ENCODE measurements at regions of chrX and their contacts with region 1.

Region 1: DNA sequence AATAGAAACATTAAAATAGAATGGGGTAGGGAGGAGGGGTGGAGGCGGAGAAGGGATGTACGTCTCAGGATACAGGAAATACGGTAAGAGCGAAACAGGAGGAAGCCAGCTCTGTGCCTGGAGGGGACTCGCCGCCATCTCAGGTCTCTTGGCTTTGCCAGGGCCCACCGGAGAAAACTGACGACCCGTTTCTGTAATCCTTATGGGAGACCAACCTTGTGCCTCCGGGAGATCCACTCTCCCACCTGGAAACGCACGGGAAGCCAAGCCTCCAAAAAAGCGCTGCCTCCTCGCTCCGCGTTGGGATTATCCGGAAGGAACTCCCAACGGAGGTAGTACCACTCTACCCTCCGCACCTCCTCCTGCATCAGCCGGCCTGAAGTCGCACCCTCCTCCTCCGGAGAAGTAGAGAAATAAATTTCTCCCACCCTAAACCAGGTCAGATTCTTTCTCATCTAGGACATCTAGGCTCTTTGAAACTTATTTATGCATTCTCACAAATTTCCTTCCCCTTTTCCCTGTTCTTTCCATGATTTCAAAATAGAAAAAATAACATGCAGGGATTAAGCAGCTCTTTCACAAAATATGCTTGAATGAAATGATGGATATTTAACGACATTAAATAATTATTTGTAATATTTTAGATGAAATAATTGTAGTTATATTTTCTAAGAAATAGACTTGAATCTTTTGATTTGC is at the start of gene NBDY:
- DNase-seq: peak; percentile 20 to 36
- ATAC-seq: peak; percentile 88 to 98 (median 94)
- H3K4me3 ChIP-seq: peak within 1 kb of the TSS; percentile 47 to 74 (median 64)
- H3K27ac ChIP-seq: peak within 1 kb of the TSS; percentile 58 to 90 (median 84)
- H3K4me1 ChIP-seq: peaks cover 0 to 39% (median 0%) of the 10 kb centered on the region in 9 donors
- H3K27me3 ChIP-seq: peaks cover 0 to 78% (median 0%) of the 10 kb centered on the region in 7 donors
- CTCF ChIP-seq: no peak
- total RNA-seq, gene NBDY: 14.7 to 36.7 (median 25.7) TPM

Region 2: DNA sequence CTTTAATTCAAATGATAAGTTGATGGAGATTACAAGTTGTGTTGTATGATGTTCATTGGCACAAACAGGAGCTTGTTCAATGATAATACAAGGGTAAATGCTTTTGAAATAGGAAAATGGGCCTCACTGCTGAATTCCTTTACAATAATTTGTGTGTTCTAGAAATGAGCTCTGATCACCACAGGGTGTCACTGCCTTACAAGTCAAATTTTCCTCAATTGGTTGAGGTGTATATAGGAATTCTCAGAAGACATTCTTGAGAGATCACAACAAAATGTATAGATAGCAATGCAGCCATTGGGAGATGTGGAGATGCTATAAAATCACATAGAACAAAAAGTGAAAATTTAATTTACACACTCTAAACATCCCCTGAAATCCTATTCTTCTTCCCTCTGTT is 447.5 kb before region 1 on chrX:
- intact Hi-C with region 1: loop called in 1 of 10 experiments (anchors 10 kb)
- DNase-seq: no peak
- ATAC-seq: no peak
- H3K4me3 ChIP-seq: no peak overlapping the region
- H3K27ac ChIP-seq: no peak overlapping the region
- H3K4me1 ChIP-seq: no peaks in the 10 kb centered on the region
- H3K27me3 ChIP-seq: peaks cover 0 to 33% (median 0%) of the 10 kb centered on the region in 7 donors
- CTCF ChIP-seq: peak in 4 of 9 donors; percentile 14 to 29 (median 20)

Region 3: GRCh38 chrX:56462389-56462788 is 266.9 kb before region 1 on chrX:
- intact Hi-C with region 1: loop called in 1 of 10 experiments (anchors 10 kb)
- DNase-seq: no peak
- ATAC-seq: no peak
- H3K4me3 ChIP-seq: no peak overlapping the region
- H3K27ac ChIP-seq: no peak overlapping the region
- H3K4me1 ChIP-seq: no peaks in the 10 kb centered on the region
- H3K27me3 ChIP-seq: no peaks in the 10 kb centered on the region
- CTCF ChIP-seq: peak in 1 of 9 donors; percentile 30

Region 4: GRCh38 chrX:56563231-56564161 is 165.8 kb before region 1 on chrX and contains the start of gene UBQLN2:
- intact Hi-C with region 1: loop called in 2 of 10 experiments (anchors 5 to 10 kb)
- DNase-seq: peak; percentile 81 to 84
- ATAC-seq: peak; percentile 95 to 99 (median 97)
- H3K4me3 ChIP-seq: peak within 1 kb of the TSS; percentile 57 to 78 (median 72)
- H3K27ac ChIP-seq: peak within 1 kb of the TSS; percentile 93 to 98 (median 96)
- H3K4me1 ChIP-seq: peaks cover 0 to 46% (median 20%) of the 10 kb centered on the region in 9 donors
- H3K27me3 ChIP-seq: peaks cover 0 to 22% (median 0%) of the 10 kb centered on the region in 7 donors
- CTCF ChIP-seq: peak in 3 of 9 donors; percentile 36 to 42 (median 41)
- total RNA-seq, gene UBQLN2: 29.6 to 43.8 (median 36.1) TPM

Region 5: GRCh38 chrX:56783450-56783831 is 54.1 kb after region 1 on chrX:
- intact Hi-C with region 1: no loop called
- DNase-seq: no peak
- ATAC-seq: peak in 3 of 8 donors; percentile 32 to 66 (median 33)
- H3K4me3 ChIP-seq: peak overlapping the region in 3 of 10 donors; percentile 32 to 52 (median 40)
- H3K27ac ChIP-seq: peak overlapping the region in 3 of 10 donors; percentile 76 to 85 (median 83)
- H3K4me1 ChIP-seq: peaks cover 0 to 31% (median 0%) of the 10 kb centered on the region in 9 donors
- H3K27me3 ChIP-seq: no peaks in the 10 kb centered on the region
- CTCF ChIP-seq: peak in 2 of 9 donors; percentile 45 to 53

Region 6: DNA sequence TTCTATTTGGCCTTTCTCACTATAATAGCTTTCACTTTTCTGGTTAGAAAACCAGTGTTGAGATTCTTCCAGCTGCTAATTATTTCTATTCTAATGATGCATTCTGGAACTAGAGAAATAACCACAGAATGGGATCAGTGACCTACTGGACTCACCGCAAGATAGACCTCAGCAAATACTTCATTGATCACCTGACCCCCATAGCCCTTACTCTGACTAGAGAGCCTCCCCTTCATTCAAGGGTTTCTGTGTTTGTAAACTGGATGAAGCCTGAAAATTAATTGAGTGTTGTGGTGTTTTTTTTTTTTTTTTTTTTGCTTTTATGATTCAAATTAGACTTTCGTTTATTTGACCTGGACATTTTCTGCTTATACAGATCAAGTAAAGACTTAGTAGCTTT is 96.7 kb after region 1 on chrX:
- intact Hi-C with region 1: no loop called
- DNase-seq: no peak
- ATAC-seq: no peak
- H3K4me3 ChIP-seq: no peak overlapping the region
- H3K27ac ChIP-seq: no peak overlapping the region
- H3K4me1 ChIP-seq: no peaks in the 10 kb centered on the region
- H3K27me3 ChIP-seq: peaks cover 0 to 54% (median 0%) of the 10 kb centered on the region in 7 donors
- CTCF ChIP-seq: no peak